Activated CD4-positive, alpha-beta memory T cell treated with anti-CD3 and anti-CD28 coated beads, Interleukin-2, amount 10 ng/mL, durations not matched to agents 7 days and 5 days (primary cell): ENCODE measurements at regions of chr17 and their contacts with region 1.

Region 1: GRCh38 chr17:82518826-82519810 is at the start of gene FOXK2:
- DNase-seq: peak; percentile 95
- H3K4me3 Mint-ChIP-seq: peak within 1 kb of the TSS; percentile 82
- H3K27ac Mint-ChIP-seq: peak within 1 kb of the TSS; percentile 81
- H3K4me1 Mint-ChIP-seq: peaks cover 26% of the 10 kb centered on the region
- H3K27me3 Mint-ChIP-seq: no peaks in the 10 kb centered on the region
- total RNA-seq, gene FOXK2: 53.3 to 68.2 TPM

Region 2: DNA sequence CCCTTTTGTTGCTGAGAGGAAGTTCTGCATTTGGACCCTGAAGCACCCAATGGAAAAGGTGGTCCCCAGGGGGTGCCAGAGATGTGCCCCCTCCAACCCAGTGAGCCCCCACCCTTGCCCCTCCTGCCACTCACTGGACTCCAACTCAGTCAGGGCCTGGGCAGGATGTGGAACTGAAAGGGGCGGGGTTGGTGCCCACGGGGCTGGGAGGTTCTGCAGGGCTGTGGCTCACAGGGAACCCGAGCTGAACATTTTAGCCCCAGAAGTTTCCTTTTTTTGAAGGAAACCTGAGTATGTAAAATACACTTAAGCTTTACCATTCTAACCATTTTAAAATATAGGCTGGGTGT is 84.9 kb before region 1 on chr17:
- CTCF ChIA-PET with region 1: no interaction called
- POLR2A ChIA-PET with region 1: no interaction called
- DNase-seq: peak; percentile 71
- H3K4me3 Mint-ChIP-seq: no peak overlapping the region
- H3K27ac Mint-ChIP-seq: peak overlapping the region; percentile 78
- H3K4me1 Mint-ChIP-seq: peaks cover 33% of the 10 kb centered on the region
- H3K27me3 Mint-ChIP-seq: no peaks in the 10 kb centered on the region

Region 3: DNA sequence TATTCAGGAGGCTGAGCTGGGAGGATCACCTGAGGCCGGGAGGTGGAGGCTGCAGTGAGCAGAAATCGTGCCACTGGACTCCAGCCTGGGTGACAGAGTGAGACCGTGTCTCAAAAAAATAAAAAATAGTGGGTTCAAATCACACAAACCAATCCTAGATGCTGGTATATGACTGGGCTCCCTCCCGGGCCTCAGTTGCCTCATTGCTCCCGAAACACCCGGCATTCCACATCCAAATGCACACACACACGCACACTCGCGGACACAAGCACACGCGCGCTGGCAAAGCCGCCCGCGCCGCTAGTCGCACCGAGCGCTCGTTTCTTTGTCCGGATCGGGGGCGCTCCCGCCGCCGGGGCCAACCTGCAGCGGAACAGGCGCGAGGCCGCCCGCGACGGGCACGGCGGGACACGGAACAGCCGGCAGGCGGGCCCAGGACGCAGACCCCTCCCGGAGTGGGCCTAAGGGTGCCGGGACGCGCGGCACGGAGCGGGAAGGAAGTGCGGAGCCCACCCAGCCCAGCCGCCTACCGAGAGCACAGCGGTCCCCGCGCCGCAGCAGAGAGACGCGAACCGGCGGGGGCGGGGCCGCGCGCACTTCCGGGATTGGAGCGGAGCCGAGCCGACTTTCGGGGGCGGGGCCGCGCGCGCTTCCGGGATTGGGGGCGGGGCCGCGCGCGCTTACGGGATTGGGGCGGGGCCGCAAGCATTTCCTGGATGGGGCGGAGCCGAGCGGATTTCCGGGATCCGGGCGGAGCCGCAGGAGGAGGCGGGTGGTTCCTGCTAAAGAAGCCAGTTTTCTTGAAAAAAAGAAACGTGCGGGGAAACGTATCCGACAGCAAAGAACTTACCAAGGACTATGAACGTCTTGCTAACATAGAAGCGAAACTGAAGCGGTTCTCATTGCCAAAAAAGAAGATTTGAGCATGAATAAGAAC is 68.7 kb before region 1 on chr17 and contains the start of gene CYBC1:
- CTCF ChIA-PET with region 1: no interaction called
- POLR2A ChIA-PET with region 1: interaction called, 21 read pairs
- DNase-seq: peak; percentile 96
- H3K4me3 Mint-ChIP-seq: peak within 1 kb of the TSS; percentile 96
- H3K27ac Mint-ChIP-seq: peak within 1 kb of the TSS; percentile 99
- H3K4me1 Mint-ChIP-seq: peaks cover 49% of the 10 kb centered on the region
- H3K27me3 Mint-ChIP-seq: no peaks in the 10 kb centered on the region
- total RNA-seq, gene CYBC1: 308 to 313 TPM

Region 4: GRCh38 chr17:82457997-82458864 is 60.9 kb before region 1 on chr17 and contains the start of gene NARF:
- CTCF ChIA-PET with region 1: no interaction called
- POLR2A ChIA-PET with region 1: interaction called, 15 read pairs
- DNase-seq: peak; percentile 97
- H3K4me3 Mint-ChIP-seq: peak within 1 kb of the TSS; percentile 97
- H3K27ac Mint-ChIP-seq: peak within 1 kb of the TSS; percentile 96
- H3K4me1 Mint-ChIP-seq: peaks cover 56% of the 10 kb centered on the region
- H3K27me3 Mint-ChIP-seq: no peaks in the 10 kb centered on the region
- total RNA-seq, gene NARF: 150 to 153 TPM

Region 5: DNA sequence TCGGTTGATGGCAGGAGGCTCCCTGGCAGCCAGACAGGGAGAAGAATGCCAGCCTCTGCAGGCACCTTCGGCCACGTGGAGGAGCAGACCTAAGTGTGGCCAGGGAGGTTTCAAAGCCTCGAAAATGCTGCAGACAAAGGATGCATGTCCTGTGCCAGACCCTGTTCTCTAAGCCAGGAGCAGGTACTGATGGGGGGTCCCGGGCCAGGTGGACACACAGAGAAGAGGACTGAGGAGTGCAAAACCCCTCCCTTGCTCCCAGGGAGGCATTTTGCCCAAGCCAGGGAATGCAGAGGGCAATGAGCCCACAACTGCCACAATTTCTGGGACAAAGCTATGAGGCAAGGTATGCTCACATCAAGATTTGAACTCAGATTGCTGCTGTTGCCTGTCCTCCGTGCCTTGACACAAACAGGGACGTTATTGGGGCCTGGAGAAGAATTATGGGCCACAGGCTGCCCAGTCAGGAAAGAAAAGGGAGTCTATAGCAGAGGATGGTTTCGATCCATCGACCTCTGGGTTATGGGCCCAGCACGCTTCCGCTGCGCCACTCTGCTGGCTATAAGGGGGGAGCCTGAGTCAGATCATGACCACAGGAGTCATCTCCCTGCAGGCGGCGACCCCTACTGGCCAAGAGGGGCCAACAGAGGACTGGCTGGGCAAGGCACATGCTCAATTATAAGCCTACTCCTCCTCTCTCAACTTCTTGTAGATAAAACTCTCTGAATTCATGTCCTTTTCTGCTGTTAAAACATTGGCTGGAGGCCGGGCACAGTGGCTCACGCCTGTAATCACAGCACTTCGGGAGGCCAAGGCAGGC is 24.7 kb before region 1 on chr17:
- CTCF ChIA-PET with region 1: interaction called, 4 read pairs
- POLR2A ChIA-PET with region 1: interaction called, 34 read pairs
- DNase-seq: peak; percentile 93
- H3K4me3 Mint-ChIP-seq: peak overlapping the region; percentile 58
- H3K27ac Mint-ChIP-seq: peak overlapping the region; percentile 80
- H3K4me1 Mint-ChIP-seq: peaks cover 48% of the 10 kb centered on the region
- H3K27me3 Mint-ChIP-seq: no peaks in the 10 kb centered on the region

Region 6: DNA sequence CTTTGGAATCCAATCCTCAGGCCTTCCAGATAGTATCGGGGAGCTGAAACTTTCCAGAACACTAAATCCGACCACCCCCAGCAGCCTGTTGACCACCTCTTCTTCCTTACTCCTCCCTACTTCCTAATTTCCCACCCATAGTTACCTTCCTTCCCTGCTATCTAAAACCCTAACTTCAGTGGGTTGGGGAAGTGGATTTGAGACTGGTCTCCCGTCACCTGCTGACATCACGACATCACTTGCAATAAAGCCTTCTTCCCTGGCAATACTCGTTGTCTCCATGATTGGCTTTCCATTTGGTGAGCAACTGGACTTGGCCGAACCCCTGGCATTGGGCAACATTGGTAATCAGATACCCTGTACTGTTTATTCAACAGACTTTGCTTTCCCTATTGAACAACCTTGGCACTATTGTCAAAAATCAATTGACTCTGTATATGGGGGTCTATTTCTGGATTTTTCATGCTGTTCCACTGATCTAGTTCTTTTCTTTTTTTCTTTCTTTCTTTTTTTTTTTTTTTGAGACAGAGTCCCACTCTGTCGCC is 11.4 kb before region 1 on chr17:
- CTCF ChIA-PET with region 1: interaction called, 5 read pairs
- POLR2A ChIA-PET with region 1: interaction called, 27 read pairs
- DNase-seq: no peak
- H3K4me3 Mint-ChIP-seq: no peak overlapping the region
- H3K27ac Mint-ChIP-seq: no peak overlapping the region
- H3K4me1 Mint-ChIP-seq: peaks cover 19% of the 10 kb centered on the region
- H3K27me3 Mint-ChIP-seq: no peaks in the 10 kb centered on the region

Region 7: DNA sequence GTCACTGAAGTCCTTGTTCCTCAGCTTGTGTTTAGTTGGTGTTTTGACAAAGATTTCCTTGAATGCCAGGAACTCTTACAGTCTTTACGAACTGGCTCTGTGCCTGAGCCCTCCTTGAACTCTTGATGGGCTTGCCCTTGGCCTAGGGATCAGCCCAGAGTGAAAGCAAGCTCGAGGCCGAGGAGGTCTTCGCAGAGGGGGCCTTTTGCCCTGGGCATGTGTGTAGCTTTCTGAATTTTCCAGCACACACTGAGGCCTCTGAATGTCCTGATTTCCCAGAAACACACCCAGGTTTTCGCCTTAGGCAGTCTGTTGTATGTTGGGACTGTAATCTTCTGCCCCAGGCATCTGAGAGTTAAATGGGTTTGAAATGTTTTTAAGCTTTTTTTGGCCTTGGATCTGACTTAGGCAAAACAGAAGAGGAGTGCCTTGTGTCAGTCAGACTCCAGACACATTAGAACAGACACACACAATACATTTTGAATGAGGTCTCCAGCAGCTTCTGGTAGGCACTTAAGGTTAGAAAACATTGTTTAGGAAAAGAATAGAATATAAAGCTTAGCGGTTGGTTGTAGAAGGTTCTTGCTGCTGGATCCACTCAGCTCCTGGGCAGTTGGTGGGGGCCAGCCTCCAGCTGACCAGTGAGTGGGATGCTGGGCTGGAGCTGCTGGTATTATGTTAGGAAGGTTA is 17.5 kb after region 1 on chr17:
- CTCF ChIA-PET with region 1: interaction called, 14 read pairs
- POLR2A ChIA-PET with region 1: interaction called, 38 read pairs
- DNase-seq: no peak
- H3K4me3 Mint-ChIP-seq: peak overlapping the region; percentile 19
- H3K27ac Mint-ChIP-seq: peak overlapping the region; percentile 66
- H3K4me1 Mint-ChIP-seq: peaks cover 52% of the 10 kb centered on the region
- H3K27me3 Mint-ChIP-seq: no peaks in the 10 kb centered on the region

Region 8: GRCh38 chr17:82551779-82552457 is 32.8 kb after region 1 on chr17:
- CTCF ChIA-PET with region 1: interaction called, 7 read pairs
- POLR2A ChIA-PET with region 1: interaction called, 10 read pairs
- DNase-seq: peak; percentile 79
- H3K4me3 Mint-ChIP-seq: no peak overlapping the region
- H3K27ac Mint-ChIP-seq: no peak overlapping the region
- H3K4me1 Mint-ChIP-seq: peaks cover 25% of the 10 kb centered on the region
- H3K27me3 Mint-ChIP-seq: no peaks in the 10 kb centered on the region